Stomach (tissue), 19 donors: ENCODE measurements at regions of chr7 and their contacts with region 1.

Region 1: GRCh38 chr7:112550468-112551060 is 69.8 kb downstream of the LSMEM1 start:
- DNase-seq: peak in 1 of 2 donors; percentile 76
- H3K4me3 ChIP-seq: no peak overlapping the region
- H3K27ac ChIP-seq: no peak overlapping the region
- H3K4me1 ChIP-seq: no peaks in the 10 kb centered on the region
- H3K27me3 ChIP-seq: peaks cover 0 to 6% (median 6%) of the 10 kb centered on the region in 3 donors
- CTCF ChIP-seq: peak in 5 of 7 experiments; percentile 47 to 85 (median 79)
- EP300 ChIP-seq: no peak
- POLR2A ChIP-seq: no peak

Region 2: DNA sequence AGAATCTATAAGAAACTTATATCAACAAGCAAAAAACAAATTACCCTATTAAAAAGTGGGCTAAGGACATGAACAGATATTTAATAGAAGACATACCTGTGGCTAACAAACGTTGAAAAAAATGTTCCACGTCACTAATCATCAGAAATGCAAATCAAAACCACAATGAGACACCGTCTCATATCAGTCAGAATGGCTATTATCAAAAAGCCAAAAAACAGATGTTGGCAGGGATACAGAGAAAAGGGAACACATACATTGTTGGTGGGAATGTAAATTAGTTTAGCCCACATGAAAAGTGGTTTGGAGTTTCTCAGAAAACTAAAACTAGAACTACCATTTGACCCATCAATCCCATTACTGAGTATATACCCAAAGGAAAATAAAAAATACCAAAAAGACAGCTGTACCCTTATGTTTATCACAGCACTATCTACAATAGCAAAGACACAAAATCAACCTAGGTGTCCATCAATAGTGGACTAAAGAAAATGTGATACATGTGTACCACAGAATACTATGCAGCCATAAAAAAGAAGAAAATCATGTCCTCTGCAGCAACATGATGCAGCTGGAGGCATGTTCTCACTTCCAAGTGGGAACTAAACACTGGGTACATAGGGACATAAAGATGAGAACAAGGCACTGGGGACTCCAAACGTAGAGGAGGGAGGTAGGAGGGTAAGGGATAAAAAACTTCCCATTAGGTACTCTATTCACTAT is 323.4 kb after region 1 on chr7:
- intact Hi-C with region 1: no loop called
- DNase-seq: no peak
- H3K4me3 ChIP-seq: no peak overlapping the region
- H3K27ac ChIP-seq: no peak overlapping the region
- H3K4me1 ChIP-seq: peaks cover 0 to 9% (median 2%) of the 10 kb centered on the region in 4 donors
- H3K27me3 ChIP-seq: no peaks in the 10 kb centered on the region
- CTCF ChIP-seq: no peak
- EP300 ChIP-seq: no peak
- POLR2A ChIP-seq: no peak

Region 3: GRCh38 chr7:112898432-112899290 is 348.1 kb after region 1 on chr7:
- intact Hi-C with region 1: loop called (anchors 10 kb)
- DNase-seq: peak; percentile 49 to 76
- H3K4me3 ChIP-seq: no peak overlapping the region
- H3K27ac ChIP-seq: no peak overlapping the region
- H3K4me1 ChIP-seq: peaks cover 0 to 6% (median 0%) of the 10 kb centered on the region in 4 donors
- H3K27me3 ChIP-seq: no peaks in the 10 kb centered on the region
- CTCF ChIP-seq: peak in 5 of 7 experiments; percentile 11 to 66 (median 43)
- EP300 ChIP-seq: no peak
- POLR2A ChIP-seq: no peak

Region 4: GRCh38 chr7:113414401-113415035 is 864.0 kb after region 1 on chr7:
- intact Hi-C with region 1: loop called (anchors 10 kb)
- DNase-seq: no peak
- H3K4me3 ChIP-seq: no peak overlapping the region
- H3K27ac ChIP-seq: no peak overlapping the region
- H3K4me1 ChIP-seq: no peaks in the 10 kb centered on the region
- H3K27me3 ChIP-seq: no peaks in the 10 kb centered on the region
- CTCF ChIP-seq: no peak
- EP300 ChIP-seq: no peak
- POLR2A ChIP-seq: no peak